Activated CD4-positive, alpha-beta T cell treated with anti-CD3 and anti-CD28 coated beads for 36 hours (primary cell): ENCODE measurements at regions of chr2 and their contacts with region 1.

Region 1: GRCh38 chr2:226447338-226448295 is 352.0 kb downstream of the IRS1 start:
- DNase-seq: no peak
- ATAC-seq: no peak
- H3K4me3 Mint-ChIP-seq: no peak overlapping the region
- H3K27ac Mint-ChIP-seq: no peak overlapping the region
- H3K4me1 Mint-ChIP-seq: no peaks in the 10 kb centered on the region
- H3K27me3 Mint-ChIP-seq: peaks cover 15% of the 10 kb centered on the region

Region 2: DNA sequence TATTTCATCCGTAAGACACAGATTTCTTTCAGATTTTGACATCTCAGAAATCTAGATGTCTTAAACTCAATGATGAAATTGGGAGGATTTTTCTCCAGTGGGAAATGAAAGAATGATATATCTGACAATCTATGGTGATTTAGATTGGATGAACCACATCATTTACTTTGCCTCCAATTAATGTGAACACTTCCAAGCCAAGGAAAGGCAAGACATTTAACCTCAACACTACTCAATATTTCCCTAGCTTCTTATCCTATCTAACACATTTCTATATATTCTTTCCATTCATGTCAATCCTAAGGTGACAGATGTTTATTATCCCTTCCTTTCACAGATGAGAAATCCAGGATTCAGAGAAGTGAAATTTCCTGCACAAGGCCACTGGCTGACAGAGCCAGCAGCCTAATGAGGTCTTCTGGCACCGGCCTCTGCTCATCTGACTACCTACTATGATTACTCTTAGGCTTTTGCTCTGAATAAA is 24.4 kb after region 1 on chr2:
- CTCF ChIA-PET with region 1: no interaction called
- POLR2A ChIA-PET with region 1: no interaction called
- intact Hi-C with region 1: loop called in 1 of 2 experiments (anchors 2 kb)
- DNase-seq: no peak
- ATAC-seq: no peak
- H3K4me3 Mint-ChIP-seq: no peak overlapping the region
- H3K27ac Mint-ChIP-seq: no peak overlapping the region
- H3K4me1 Mint-ChIP-seq: no peaks in the 10 kb centered on the region
- H3K27me3 Mint-ChIP-seq: peaks cover 5% of the 10 kb centered on the region